AG04450 (cell line): ENCODE measurements at regions of chr5 and their contacts with region 1.

Region 1: DNA sequence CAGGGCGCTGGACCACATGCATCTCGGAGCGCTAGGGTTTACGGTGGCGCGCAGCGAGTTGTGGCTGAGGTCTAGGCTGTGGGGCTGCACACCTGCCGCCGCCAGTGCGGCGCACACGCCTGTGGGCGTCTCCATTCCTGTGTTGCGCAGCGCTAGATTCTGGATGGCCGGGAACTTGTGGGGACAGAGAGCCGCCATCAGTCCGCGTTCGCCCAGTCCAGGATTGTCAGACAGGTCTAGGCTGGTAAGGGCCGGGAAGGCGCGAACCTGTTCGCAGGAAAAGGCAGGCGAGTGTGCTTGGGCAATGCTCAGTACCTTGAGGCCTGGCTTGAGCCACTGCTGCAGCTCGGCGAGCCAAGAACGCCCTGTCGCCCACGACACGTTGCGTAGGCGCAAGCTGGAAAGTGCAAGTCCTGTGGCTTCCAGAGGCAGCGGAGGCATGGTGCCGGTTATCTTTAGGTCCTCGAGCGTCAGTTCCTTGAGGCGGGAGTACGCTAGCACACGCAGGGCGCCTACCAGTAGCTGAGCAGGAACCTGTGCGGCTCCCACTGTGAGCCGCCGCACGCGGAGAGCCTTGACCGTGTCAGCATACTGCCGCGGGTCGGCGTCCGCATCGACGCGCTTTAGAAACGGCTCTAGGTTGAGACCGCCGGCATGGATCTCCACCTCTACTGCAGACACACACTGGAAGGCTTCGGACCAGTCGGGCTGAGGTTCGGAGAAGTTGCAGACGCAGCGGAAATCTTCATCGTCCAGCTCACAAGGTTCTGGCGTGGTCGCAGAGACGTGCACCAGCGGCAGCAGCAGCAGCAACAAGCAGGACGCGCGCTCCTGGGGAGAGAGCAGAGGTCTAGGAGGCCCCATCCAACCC is 590 bp downstream of the CD14 start:
- DNase-seq: no peak
- H3K4me3 ChIP-seq: peak overlapping the region; percentile 60
- H3K27ac ChIP-seq: no peak overlapping the region
- H3K27me3 ChIP-seq: peaks cover 21% of the 10 kb centered on the region
- CTCF ChIP-seq: no peak

Region 2: DNA sequence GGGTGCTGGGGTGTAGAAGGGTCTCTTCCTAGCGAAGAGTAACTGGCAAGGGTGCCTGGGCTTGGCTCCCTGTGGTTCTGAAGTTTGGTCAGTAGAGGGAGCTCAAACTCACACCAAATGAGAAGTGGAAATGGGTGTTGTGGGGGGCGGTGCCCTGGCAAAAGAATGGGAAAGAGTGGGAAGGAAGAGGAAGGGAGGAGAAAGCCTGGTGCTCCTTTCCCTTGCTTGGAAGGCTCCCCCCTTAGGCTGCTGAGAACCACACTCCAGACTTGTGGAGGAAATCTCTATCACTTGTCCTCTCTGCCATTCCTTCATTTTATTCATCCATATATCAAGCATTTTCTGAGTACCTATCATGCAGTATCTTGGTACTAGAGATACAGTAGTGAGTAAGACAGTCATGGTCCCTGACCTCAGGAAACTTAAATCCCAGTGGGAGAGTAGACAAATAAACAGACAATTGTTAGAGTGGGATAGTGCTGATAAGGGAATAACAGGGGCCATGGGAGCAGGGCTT is 259.4 kb before region 1 on chr5:
- CTCF ChIA-PET with region 1: interaction called, 15 read pairs
- POLR2A ChIA-PET with region 1: no interaction called
- DNase-seq: peak; percentile 44
- H3K4me3 ChIP-seq: no peak overlapping the region
- H3K27ac ChIP-seq: no peak overlapping the region
- H3K27me3 ChIP-seq: peaks cover 6% of the 10 kb centered on the region
- CTCF ChIP-seq: peak; percentile 91

Region 3: GRCh38 chr5:140547508-140548299 is 84.7 kb before region 1 on chr5 and contains the start of gene EIF4EBP3:
- CTCF ChIA-PET with region 1: interaction called, 17 read pairs
- POLR2A ChIA-PET with region 1: interaction called, 4 read pairs
- DNase-seq: peak; percentile 90
- H3K4me3 ChIP-seq: peak within 1 kb of the TSS; percentile 49
- H3K27ac ChIP-seq: peak within 1 kb of the TSS; percentile 93
- H3K27me3 ChIP-seq: no peaks in the 10 kb centered on the region
- CTCF ChIP-seq: peak; percentile 63
- polyA plus RNA-seq, gene EIF4EBP3: 1.7 and 2.8 TPM in 2 replicates

Region 4: GRCh38 chr5:140564196-140565023 is 68.0 kb before region 1 on chr5 and contains the starts of genes APBB3 and SLC35A4:
- CTCF ChIA-PET with region 1: interaction called, 8 read pairs
- POLR2A ChIA-PET with region 1: interaction called, 13 read pairs
- DNase-seq: peak; percentile 99
- H3K4me3 ChIP-seq: peak within 1 kb of the TSS; percentile 98
- H3K27ac ChIP-seq: peak within 1 kb of the TSS; percentile 89
- H3K27me3 ChIP-seq: no peaks in the 10 kb centered on the region
- CTCF ChIP-seq: no peak
- polyA plus RNA-seq, gene APBB3: 13.6 and 14.9 TPM in 2 replicates
- polyA plus RNA-seq, gene SLC35A4: 63.4 and 86.2 TPM in 2 replicates

Region 5: GRCh38 chr5:140622301-140622700 is 10.1 kb before region 1 on chr5:
- CTCF ChIA-PET with region 1: interaction called, 15 read pairs
- POLR2A ChIA-PET with region 1: no interaction called
- DNase-seq: no peak
- H3K4me3 ChIP-seq: no peak overlapping the region
- H3K27ac ChIP-seq: no peak overlapping the region
- H3K27me3 ChIP-seq: peaks cover 17% of the 10 kb centered on the region
- CTCF ChIP-seq: no peak

Region 6: GRCh38 chr5:140926443-140927227 is 294.2 kb after region 1 on chr5:
- CTCF ChIA-PET with region 1: no interaction called
- POLR2A ChIA-PET with region 1: no interaction called
- DNase-seq: no peak
- H3K4me3 ChIP-seq: peak overlapping the region; percentile 18
- H3K27ac ChIP-seq: no peak overlapping the region
- H3K27me3 ChIP-seq: no peaks in the 10 kb centered on the region
- CTCF ChIP-seq: no peak

Region 7: GRCh38 chr5:140946578-140946977 is 314.2 kb after region 1 on chr5:
- CTCF ChIA-PET with region 1: no interaction called
- POLR2A ChIA-PET with region 1: no interaction called
- DNase-seq: no peak
- H3K4me3 ChIP-seq: no peak overlapping the region
- H3K27ac ChIP-seq: no peak overlapping the region
- H3K27me3 ChIP-seq: no peaks in the 10 kb centered on the region
- CTCF ChIP-seq: no peak